CD4-positive, alpha-beta memory T cell (primary cell): ENCODE measurements at regions of chr17 and their contacts with region 1.

Region 1: GRCh38 chr17:40399185-40399584 is 18.5 kb downstream of the TOP2A start:
- DNase-seq: peak in 4 of 5 donors; percentile 40 to 66 (median 57)
- H3K4me3 ChIP-seq: no peak overlapping the region
- H3K4me3 Mint-ChIP-seq: no peak overlapping the region
- H3K27ac ChIP-seq: no peak overlapping the region
- H3K27ac Mint-ChIP-seq: peak overlapping the region in 2 of 7 donors; percentile 82 to 84
- H3K4me1 ChIP-seq: peaks cover 21% of the 10 kb centered on the region
- H3K4me1 Mint-ChIP-seq: peaks cover 16 to 24% (median 21%) of the 10 kb centered on the region in 4 donors
- H3K27me3 ChIP-seq: no peaks in the 10 kb centered on the region
- H3K27me3 Mint-ChIP-seq: no peaks in the 10 kb centered on the region

Region 2: DNA sequence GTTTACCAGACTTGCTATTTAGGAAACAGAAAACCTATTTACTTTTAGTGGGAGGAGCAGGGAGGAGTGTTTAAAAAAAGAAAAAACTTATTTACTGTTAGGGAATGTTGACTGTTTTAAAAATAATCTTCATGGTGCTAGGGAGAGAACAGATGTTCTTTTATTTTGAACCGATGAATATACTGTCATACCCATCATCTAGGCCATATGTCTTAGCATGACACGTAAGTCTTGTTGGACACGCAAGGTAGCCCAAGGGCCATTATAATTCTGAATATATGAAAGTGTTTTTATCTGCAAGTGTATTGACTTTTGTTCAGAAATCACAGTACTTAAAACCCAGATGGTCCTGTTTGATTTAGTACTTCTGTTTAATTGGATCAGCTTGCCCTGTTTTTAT is 168.5 kb before region 1 on chr17:
- CTCF ChIA-PET with region 1: no interaction called
- POLR2A ChIA-PET with region 1: no interaction called
- intact Hi-C with region 1: no loop called
- DNase-seq: no peak
- H3K4me3 ChIP-seq: no peak overlapping the region
- H3K4me3 Mint-ChIP-seq: peak overlapping the region in 1 of 8 donors; percentile 4
- H3K27ac ChIP-seq: no peak overlapping the region
- H3K27ac Mint-ChIP-seq: peak overlapping the region in 3 of 7 donors; percentile 19 to 42 (median 39)
- H3K4me1 ChIP-seq: peaks cover 9% of the 10 kb centered on the region
- H3K4me1 Mint-ChIP-seq: peaks cover 15 to 36% (median 18%) of the 10 kb centered on the region in 4 donors
- H3K27me3 ChIP-seq: no peaks in the 10 kb centered on the region
- H3K27me3 Mint-ChIP-seq: no peaks in the 10 kb centered on the region

Region 3: DNA sequence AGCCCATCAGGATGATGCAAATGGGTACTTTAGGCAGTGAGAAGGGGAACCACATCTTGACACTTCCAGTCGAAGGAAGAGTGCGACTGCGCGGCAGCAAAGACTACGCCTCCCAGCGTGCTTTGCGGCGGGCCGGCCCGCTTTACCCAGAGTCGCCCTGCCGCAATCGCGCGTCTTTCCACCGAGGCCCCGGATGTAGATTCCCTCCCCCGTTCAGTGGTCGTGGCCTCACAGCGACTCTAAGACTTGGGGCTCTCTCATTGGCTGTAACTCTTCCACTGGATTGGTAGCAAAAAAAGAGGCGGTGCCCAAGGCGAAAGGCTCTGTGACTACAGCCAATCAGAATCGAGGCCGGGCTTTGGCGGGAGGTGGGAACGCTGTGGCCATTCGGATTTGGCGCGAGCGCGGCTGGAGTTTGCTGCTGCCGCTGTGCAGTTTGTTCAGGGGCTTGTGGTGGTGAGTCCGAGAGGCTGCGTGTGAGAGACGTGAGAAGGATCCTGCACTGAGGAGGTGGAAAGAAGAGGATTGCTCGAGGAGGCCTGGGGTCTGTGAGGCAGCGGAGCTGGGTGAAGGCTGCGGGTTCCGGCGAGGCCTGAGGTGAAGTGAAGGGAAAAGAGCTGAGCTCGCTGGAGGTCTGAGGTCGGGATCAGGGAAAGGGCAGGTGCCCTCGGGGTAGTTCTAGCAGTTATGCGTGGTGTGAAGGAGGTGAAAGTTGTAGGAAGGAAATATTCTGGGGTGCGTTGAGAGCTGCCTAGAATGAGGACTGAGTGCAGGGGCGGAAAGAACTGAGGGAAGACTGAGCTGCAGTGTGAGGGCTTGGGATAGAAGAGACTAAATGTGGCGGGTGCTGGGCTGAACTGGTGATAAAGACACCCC is 111.5 kb before region 1 on chr17 and contains the start of gene CDC6:
- CTCF ChIA-PET with region 1: no interaction called
- POLR2A ChIA-PET with region 1: no interaction called
- intact Hi-C with region 1: no loop called
- DNase-seq: peak; percentile 97 to 100 (median 98)
- H3K4me3 ChIP-seq: peak within 1 kb of the TSS; percentile 80 to 89
- H3K4me3 Mint-ChIP-seq: peak within 1 kb of the TSS; percentile 97 to 100 (median 99)
- H3K27ac ChIP-seq: peak within 1 kb of the TSS; percentile 42
- H3K27ac Mint-ChIP-seq: peak within 1 kb of the TSS; percentile 82 to 98 (median 94)
- H3K4me1 ChIP-seq: peaks cover 26% of the 10 kb centered on the region
- H3K4me1 Mint-ChIP-seq: peaks cover 17 to 40% (median 27%) of the 10 kb centered on the region in 4 donors
- H3K27me3 ChIP-seq: no peaks in the 10 kb centered on the region
- H3K27me3 Mint-ChIP-seq: no peaks in the 10 kb centered on the region
- total RNA-seq, gene CDC6: 0.72 to 2.1 TPM

Region 4: GRCh38 chr17:40362696-40363110 is 36.5 kb before region 1 on chr17:
- CTCF ChIA-PET with region 1: no interaction called
- POLR2A ChIA-PET with region 1: no interaction called
- intact Hi-C with region 1: loop called (anchors 5 kb)
- DNase-seq: peak; percentile 72 to 76 (median 74)
- H3K4me3 ChIP-seq: peak overlapping the region in 1 of 2 donors; percentile 47
- H3K4me3 Mint-ChIP-seq: peak overlapping the region in 7 of 8 donors; percentile 39 to 82 (median 64)
- H3K27ac ChIP-seq: no peak overlapping the region
- H3K27ac Mint-ChIP-seq: peak overlapping the region in 3 of 7 donors; percentile 11 to 69 (median 57)
- H3K4me1 ChIP-seq: peaks cover 21% of the 10 kb centered on the region
- H3K4me1 Mint-ChIP-seq: peaks cover 5 to 12% (median 9%) of the 10 kb centered on the region in 4 donors
- H3K27me3 ChIP-seq: no peaks in the 10 kb centered on the region
- H3K27me3 Mint-ChIP-seq: peaks cover 0 to 7% of the 10 kb centered on the region in 2 donors

Region 5: GRCh38 chr17:40551879-40552768 is 152.9 kb after region 1 on chr17:
- CTCF ChIA-PET with region 1: interaction called, 17 read pairs
- POLR2A ChIA-PET with region 1: interaction called, 3 read pairs
- intact Hi-C with region 1: no loop called
- DNase-seq: peak in 1 of 5 donors; percentile 25
- H3K4me3 ChIP-seq: no peak overlapping the region
- H3K4me3 Mint-ChIP-seq: peak overlapping the region in 5 of 8 donors; percentile 13 to 69 (median 27)
- H3K27ac ChIP-seq: no peak overlapping the region
- H3K27ac Mint-ChIP-seq: peak overlapping the region; percentile 60 to 96 (median 89)
- H3K4me1 ChIP-seq: peaks cover 99% of the 10 kb centered on the region
- H3K4me1 Mint-ChIP-seq: peaks cover 69 to 100% (median 86%) of the 10 kb centered on the region in 4 donors
- H3K27me3 ChIP-seq: no peaks in the 10 kb centered on the region
- H3K27me3 Mint-ChIP-seq: no peaks in the 10 kb centered on the region